ENCODE measurements at regions of chr18 and their contacts with region 1.

Region 1: GRCh38 chr18:76982841-76983587 is 149.6 kb downstream of the MBP start:
- DNase-seq: peak; percentile 68 to 73
- ATAC-seq: peak; percentile 85 to 94
- H3K4me3 ChIP-seq: no peak overlapping the region
- H3K27ac ChIP-seq: no peak overlapping the region
- H3K4me1 ChIP-seq: no peaks in the 10 kb centered on the region
- CTCF ChIP-seq: peak; percentile 68
- EP300 ChIP-seq: no peak
- POLR2A ChIP-seq: no peak
- RAD21 ChIP-seq: peak; percentile 51 to 59; a peak in 4 of 5 replicates

Region 2: GRCh38 chr18:76958692-76959341 is 24.2 kb before region 1 on chr18:
- CTCF ChIA-PET with region 1: interaction called, 12 read pairs
- POLR2A ChIA-PET with region 1: no interaction called
- DNase-seq: no peak
- ATAC-seq: no peak
- H3K4me3 ChIP-seq: no peak overlapping the region
- H3K27ac ChIP-seq: no peak overlapping the region
- H3K4me1 ChIP-seq: no peaks in the 10 kb centered on the region
- CTCF ChIP-seq: no peak
- EP300 ChIP-seq: no peak
- POLR2A ChIP-seq: no peak
- RAD21 ChIP-seq: no peak